ENCODE measurements at regions of chrX and their contacts with region 1.

Region 1: DNA sequence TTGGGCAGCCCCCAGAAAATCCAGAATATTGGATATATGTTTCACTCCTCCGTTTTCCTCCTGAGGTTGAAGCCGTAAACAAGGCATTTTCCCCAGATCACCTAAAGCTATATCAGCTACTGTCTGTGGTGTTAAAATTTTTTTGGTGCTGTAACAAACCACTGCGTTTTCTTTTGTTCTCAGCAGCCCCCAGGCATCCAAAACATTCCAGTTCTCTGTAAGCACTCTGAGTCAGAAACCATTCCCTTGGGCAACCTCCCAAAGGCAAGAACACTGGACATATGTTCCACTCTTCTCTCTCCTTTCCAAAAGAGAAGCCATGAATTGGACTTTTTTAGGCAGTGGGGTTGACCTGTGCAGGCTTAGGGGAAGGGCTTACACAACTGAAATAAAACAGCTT is 310.9 kb downstream of the MID1IP1 start:
- DNase-seq: no peak
- H3K4me3 ChIP-seq: no peak overlapping the region
- H3K27ac ChIP-seq: no peak overlapping the region
- H3K4me1 ChIP-seq: no peaks in the 10 kb centered on the region
- H3K27me3 ChIP-seq: no peaks in the 10 kb centered on the region
- CTCF ChIP-seq: no peak
- EP300 ChIP-seq: no peak
- POLR2A ChIP-seq: no peak

Region 2: DNA sequence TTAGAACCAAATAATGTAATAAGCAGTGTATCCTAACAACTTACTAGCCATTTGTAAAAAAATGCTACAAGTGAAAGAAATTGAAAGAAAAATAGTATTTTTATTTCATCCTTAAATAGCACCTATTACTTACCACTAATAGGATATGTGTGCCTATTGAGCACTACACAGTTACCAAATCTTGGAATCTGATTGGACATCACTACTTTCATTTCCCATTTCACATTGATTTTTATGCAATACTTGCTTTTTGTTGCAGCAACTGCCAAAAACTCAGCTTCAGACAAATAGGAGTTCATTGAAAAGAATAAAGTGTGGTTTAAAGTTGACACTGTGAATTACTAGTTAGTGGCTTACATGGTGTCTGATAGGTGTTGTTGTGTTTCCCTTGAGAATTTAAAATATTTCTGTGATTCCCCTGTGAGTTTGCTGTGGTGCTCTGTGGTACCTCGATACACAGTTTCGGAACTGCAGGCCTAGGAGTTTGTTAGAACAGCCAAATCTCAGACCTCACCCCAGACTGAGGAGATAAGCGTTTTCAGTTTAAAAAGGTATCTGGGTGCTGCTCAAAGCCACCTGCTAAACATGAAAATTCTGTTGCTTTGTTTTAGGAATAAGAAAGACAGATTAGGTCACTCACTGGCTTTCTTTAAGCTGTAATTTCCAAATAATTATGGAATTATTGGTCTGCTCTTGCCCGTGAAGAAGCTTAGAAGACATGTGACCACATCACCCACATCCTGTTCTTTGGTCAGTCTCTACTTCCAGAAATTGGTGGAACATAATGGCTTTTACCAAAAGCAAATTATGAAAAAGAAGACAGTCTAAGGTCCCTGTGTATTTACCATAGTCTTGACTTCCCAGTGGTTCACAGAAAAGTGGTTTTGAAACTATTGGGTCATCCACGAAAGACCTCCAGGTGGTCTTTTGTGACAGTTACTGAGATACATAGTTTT is 1008.0 kb before region 1 on chrX:
- in situ Hi-C with region 1: no loop called
- intact Hi-C with region 1: no loop called
- DNase-seq: no peak
- H3K4me3 ChIP-seq: no peak overlapping the region
- H3K27ac ChIP-seq: no peak overlapping the region
- H3K4me1 ChIP-seq: no peaks in the 10 kb centered on the region
- H3K27me3 ChIP-seq: no peaks in the 10 kb centered on the region
- CTCF ChIP-seq: no peak
- EP300 ChIP-seq: no peak
- POLR2A ChIP-seq: no peak

Region 3: DNA sequence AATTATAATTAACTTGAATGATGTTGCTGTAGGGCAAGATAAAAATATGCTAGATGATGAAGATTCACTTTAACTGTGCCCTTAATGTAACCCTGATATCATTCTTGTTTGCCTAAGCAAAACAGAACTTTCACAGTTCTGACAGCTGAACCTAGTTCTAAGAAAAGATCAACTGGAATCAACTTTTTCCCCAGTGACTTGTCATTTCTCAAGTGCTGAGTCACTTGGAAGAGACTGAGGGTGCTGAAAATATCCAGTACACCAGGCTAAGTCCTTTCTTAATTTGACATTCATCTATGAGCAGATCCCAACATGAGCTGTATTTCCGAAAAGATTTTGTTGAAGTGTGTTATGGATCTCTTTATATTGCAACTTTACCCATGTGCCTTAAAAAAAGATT is 170.5 kb before region 1 on chrX:
- in situ Hi-C with region 1: loop called in 1 of 4 experiments (anchors 10 kb)
- intact Hi-C with region 1: no loop called
- DNase-seq: no peak
- H3K4me3 ChIP-seq: no peak overlapping the region
- H3K27ac ChIP-seq: no peak overlapping the region
- H3K4me1 ChIP-seq: no peaks in the 10 kb centered on the region
- H3K27me3 ChIP-seq: no peaks in the 10 kb centered on the region
- CTCF ChIP-seq: no peak
- EP300 ChIP-seq: no peak
- POLR2A ChIP-seq: no peak